Caki2 (cell line): ENCODE measurements at regions of chr1 and their contacts with region 1.

Region 1: GRCh38 chr1:192808518-192809306 is at the start of gene RGS2:
- DNase-seq: peak; percentile 91
- total RNA-seq, gene RGS2: 0.43 and 2.4 TPM in 2 replicates

Region 2: GRCh38 chr1:192860478-192861185 is 51.9 kb after region 1 on chr1:
- in situ Hi-C with region 1: no loop called
- DNase-seq: no peak

Region 3: DNA sequence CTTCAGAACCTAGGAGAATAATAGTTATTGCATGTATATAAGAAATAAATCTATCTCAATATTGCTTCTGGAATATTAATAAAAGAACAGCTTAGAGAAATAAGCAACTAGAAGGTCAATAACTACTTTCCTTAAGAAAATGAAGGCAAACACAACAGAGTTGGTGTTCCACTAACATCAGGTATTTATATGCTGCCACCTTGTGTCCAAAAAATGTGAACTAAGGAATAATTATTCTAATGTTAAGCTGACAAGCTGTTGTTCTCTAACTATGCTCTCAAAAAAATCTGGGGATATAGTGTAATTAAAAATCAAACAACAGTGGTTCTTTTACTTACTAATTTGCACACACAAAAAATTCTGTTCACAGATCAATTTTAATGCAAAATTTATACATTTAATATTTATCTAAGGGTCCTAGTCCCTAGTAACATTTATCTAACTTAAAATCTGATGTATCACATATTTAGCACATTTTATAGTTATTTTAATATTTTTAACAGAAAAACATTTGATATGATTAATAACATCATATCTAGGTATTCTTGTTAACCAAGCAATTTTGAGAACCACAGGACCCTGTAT is 210.8 kb after region 1 on chr1:
- in situ Hi-C with region 1: loop called (anchors 25 kb)
- DNase-seq: peak; percentile 30